ENCODE measurements at regions of chr18 and their contacts with region 1.

Region 1: DNA sequence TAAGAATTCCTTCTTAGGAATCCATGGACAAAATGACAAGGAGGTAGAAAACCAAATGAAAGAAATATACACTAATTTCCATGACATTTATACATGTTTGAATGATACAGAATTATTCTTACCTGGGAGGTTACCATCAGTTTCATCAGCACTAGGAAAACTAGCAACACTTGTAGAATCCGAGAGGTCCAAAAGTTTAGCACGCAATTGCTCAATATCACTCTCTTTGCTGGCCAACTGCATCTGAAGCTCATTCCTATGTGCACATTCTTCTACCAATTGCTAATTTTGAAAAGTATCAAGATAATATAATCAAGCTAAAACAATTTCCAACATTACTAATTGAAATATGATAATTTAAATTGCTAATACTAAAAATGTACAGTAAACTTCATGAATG is 144.8 kb downstream of the ROCK1 start:
- DNase-seq: no peak
- ATAC-seq: no peak
- H3K4me3 ChIP-seq: no peak overlapping the region
- H3K27ac ChIP-seq: no peak overlapping the region
- H3K4me1 ChIP-seq: no peaks in the 10 kb centered on the region
- H3K27me3 ChIP-seq: no peaks in the 10 kb centered on the region
- CTCF ChIP-seq: no peak

Region 2: DNA sequence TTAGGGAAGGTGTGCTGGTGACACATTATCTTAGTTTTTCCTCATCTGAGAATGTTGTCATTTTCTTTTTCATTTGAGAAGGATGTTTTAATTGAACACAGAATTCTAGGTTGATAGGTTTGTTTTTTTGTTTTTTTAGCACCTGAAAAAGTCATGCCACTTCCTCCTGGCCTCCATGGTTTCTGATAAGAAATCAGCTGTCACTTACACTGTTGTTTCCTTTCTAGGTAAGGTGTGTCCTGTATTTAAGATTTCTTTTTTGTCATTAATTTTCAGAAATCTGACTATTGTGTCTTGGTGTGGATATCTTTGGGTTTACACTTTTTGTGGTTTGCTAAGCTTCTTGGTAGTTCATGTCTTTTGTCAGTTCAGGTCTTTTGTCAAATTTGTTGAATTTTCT is 45.5 kb after region 1 on chr18:
- intact Hi-C with region 1: loop called in 1 of 10 experiments (anchors 10 kb)
- DNase-seq: no peak
- ATAC-seq: no peak
- H3K4me3 ChIP-seq: no peak overlapping the region
- H3K27ac ChIP-seq: no peak overlapping the region
- H3K4me1 ChIP-seq: no peaks in the 10 kb centered on the region
- H3K27me3 ChIP-seq: no peaks in the 10 kb centered on the region
- CTCF ChIP-seq: no peak

Region 3: GRCh38 chr18:21257386-21257785 is 290.6 kb after region 1 on chr18:
- intact Hi-C with region 1: no loop called
- DNase-seq: no peak
- ATAC-seq: no peak
- H3K4me3 ChIP-seq: no peak overlapping the region
- H3K27ac ChIP-seq: no peak overlapping the region
- H3K4me1 ChIP-seq: peaks cover 0 to 7% (median 0%) of the 10 kb centered on the region in 9 donors
- H3K27me3 ChIP-seq: peaks cover 0 to 4% (median 0%) of the 10 kb centered on the region in 7 donors
- CTCF ChIP-seq: no peak

Measured in heart right ventricle (tissue), 16 donors.